ENCODE measurements at regions of chr10 and their contacts with region 1.

Region 1: DNA sequence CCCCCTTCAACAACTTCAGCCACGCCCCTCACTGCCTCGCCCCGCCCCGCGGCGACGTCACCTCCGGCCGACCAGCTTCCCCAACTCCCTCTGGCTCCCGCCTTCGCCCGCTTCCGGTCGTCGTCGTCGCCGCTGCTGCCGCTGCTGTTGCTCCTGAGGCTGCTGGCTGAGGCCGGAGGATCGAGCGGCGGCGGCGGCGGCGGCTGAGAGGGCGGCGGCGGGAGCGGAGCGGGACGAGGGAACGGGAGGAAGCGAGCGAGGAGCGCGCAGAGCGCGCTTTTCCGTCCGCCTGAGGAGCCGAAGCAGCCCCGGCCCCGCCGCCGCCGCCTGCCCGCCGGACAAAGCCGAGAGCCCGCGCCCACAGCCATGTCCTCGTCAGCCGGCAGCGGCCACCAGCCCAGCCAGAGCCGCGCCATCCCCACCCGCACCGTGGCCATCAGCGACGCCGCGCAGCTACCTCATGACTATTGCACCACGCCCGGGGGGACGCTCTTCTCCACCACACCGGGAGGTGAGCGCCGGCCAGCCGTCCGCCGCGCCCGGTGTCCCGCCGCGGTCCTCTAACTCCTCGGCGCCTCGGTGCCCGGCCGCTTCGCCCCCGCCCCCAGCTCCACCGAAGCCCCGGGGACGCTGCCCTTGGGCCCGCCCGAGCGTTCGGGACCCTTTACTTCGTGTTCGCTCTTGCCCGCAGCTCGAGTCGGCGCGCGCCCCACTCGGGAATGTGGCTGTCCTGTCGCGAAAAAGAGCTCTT is at the start of gene EIF4EBP2:
- DNase-seq: peak; percentile 94 to 100 (median 98)
- ATAC-seq: peak; percentile 93
- H3K4me3 ChIP-seq: peak within 1 kb of the TSS; percentile 87
- H3K4me3 Mint-ChIP-seq: peak within 1 kb of the TSS; percentile 96
- H3K27ac ChIP-seq: peak within 1 kb of the TSS; percentile 60 to 74
- H3K27ac Mint-ChIP-seq: peak within 1 kb of the TSS; percentile 86
- H3K4me1 ChIP-seq: peaks cover 35% of the 10 kb centered on the region
- H3K4me1 Mint-ChIP-seq: peaks cover 50% of the 10 kb centered on the region
- H3K27me3 ChIP-seq: no peaks in the 10 kb centered on the region
- H3K27me3 Mint-ChIP-seq: no peaks in the 10 kb centered on the region
- CTCF ChIP-seq: no peak
- total RNA-seq, gene EIF4EBP2: 21.4 to 22.6 TPM

Region 2: DNA sequence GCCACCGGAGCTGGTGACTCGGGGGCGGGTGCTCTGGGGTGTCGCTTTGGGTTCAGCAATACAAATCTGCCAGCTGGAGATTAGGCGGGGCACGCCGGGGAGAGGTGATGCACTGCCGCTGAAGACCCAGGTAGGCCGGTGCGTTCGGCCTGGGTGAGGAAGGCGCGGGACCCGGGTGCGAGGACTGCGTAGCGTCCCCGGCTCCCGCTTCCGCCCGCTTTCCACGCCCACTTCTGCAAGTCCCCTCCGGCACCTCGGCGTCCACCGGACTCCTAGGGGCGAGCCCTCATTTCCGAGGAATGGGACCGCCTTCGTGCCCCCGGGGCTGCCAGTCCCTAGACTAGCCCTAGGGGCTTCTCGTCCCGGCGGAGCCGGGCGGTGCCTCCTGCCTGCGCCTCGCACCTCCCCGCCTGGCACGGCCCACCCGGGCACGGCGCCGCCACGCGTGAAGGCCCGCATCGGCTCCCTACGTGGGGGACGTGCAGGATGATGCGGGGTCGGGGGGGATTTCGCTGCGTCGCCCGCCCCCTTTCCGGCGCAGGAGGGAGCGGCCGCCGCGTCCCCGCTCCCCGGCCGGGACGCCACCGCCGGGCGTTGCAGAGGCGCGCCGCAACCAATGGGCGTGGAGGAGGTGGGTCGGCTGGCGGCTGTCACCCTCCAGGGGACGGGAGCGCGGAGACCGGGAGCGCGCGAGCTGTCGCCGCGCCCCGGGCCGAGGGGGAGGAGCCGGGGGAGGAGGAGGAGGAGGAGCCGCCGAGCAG is 1085.9 kb before region 1 on chr10:
- CTCF ChIA-PET with region 1: no interaction called
- POLR2A ChIA-PET with region 1: no interaction called
- intact Hi-C with region 1: loop called in 1 of 2 experiments (anchors 5 kb)
- DNase-seq: peak; percentile 83 to 96 (median 90)
- ATAC-seq: peak; percentile 90
- H3K4me3 ChIP-seq: peak overlapping the region; percentile 80
- H3K4me3 Mint-ChIP-seq: peak overlapping the region; percentile 98
- H3K27ac ChIP-seq: peak overlapping the region; percentile 86 to 93
- H3K27ac Mint-ChIP-seq: peak overlapping the region; percentile 95
- H3K4me1 ChIP-seq: peaks cover 45% of the 10 kb centered on the region
- H3K4me1 Mint-ChIP-seq: peaks cover 42% of the 10 kb centered on the region
- H3K27me3 ChIP-seq: no peaks in the 10 kb centered on the region
- H3K27me3 Mint-ChIP-seq: no peaks in the 10 kb centered on the region
- CTCF ChIP-seq: no peak

Region 3: GRCh38 chr10:70169649-70170364 is 234.4 kb before region 1 on chr10:
- CTCF ChIA-PET with region 1: interaction called, 6 read pairs
- POLR2A ChIA-PET with region 1: interaction called, 21 read pairs
- intact Hi-C with region 1: loop called in 1 of 2 experiments (anchors 5 kb)
- DNase-seq: peak in 3 of 14 experiments; percentile 24 to 50 (median 28)
- ATAC-seq: peak; percentile 21
- H3K4me3 ChIP-seq: peak overlapping the region; percentile 97
- H3K4me3 Mint-ChIP-seq: peak overlapping the region; percentile 98
- H3K27ac ChIP-seq: peak overlapping the region; percentile 75 to 93
- H3K27ac Mint-ChIP-seq: peak overlapping the region; percentile 94
- H3K4me1 ChIP-seq: peaks cover 60% of the 10 kb centered on the region
- H3K4me1 Mint-ChIP-seq: peaks cover 64% of the 10 kb centered on the region
- H3K27me3 ChIP-seq: no peaks in the 10 kb centered on the region
- H3K27me3 Mint-ChIP-seq: no peaks in the 10 kb centered on the region
- CTCF ChIP-seq: no peak

Region 4: DNA sequence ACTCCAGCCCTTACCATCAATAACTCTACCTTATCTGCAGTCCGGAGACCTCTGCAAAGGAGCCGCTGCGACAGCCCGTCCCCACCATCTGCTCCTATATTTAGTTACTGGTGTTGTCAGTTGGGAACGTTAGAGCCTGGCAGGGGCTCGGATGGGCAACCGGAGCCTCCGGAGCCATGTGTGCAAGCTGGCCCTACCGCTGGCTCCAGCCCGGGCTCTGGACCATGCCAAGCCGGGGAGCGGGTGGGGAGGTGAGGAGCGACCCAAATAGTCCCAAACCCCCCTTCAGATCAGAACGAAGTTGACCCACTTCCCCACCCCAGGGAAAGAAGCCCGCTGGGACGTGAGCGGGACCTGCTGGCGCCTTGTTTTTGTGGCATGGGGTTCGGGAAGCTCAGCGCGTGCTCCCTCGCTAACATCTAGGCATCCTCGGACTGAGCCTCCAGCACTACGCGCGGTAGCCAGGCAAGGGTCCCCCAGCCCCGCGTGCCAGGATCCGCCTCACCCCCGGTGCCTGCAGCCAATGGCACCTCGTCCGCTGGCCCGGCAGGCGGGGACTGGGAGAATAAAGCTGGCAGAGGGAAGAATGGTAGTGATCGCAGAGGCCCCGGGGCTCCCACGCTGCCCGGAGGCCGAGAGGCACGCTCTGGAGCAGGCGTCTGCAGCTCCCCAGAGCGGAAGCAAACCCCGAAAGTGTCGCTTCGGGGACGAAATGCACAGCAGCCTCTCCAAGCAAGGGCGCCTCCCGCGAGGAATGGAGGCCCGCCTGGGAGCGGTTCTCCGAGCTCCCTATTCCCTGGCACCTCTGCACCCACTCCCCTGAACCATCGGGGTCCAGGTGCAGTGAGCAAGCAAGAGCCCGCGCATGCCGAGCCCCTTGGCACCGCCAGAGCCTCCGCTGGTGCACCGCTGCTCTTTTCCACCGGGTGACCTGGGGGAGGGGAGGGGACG is 22.5 kb before region 1 on chr10:
- CTCF ChIA-PET with region 1: interaction called, 6 read pairs
- POLR2A ChIA-PET with region 1: interaction called, 23 read pairs
- intact Hi-C with region 1: loop called in 1 of 2 experiments (anchors 1 kb)
- DNase-seq: peak in 10 of 14 experiments; percentile 3 to 55 (median 29)
- ATAC-seq: peak; percentile 37
- H3K4me3 ChIP-seq: peak overlapping the region; percentile 94
- H3K4me3 Mint-ChIP-seq: peak overlapping the region; percentile 91
- H3K27ac ChIP-seq: no peak overlapping the region
- H3K27ac Mint-ChIP-seq: no peak overlapping the region
- H3K4me1 ChIP-seq: peaks cover 16% of the 10 kb centered on the region
- H3K4me1 Mint-ChIP-seq: peaks cover 11% of the 10 kb centered on the region
- H3K27me3 ChIP-seq: no peaks in the 10 kb centered on the region
- H3K27me3 Mint-ChIP-seq: no peaks in the 10 kb centered on the region
- CTCF ChIP-seq: no peak

Region 5: GRCh38 chr10:70430493-70431445 is 26.6 kb after region 1 on chr10:
- CTCF ChIA-PET with region 1: no interaction called
- POLR2A ChIA-PET with region 1: interaction called, 14 read pairs
- intact Hi-C with region 1: no loop called
- DNase-seq: no peak
- ATAC-seq: no peak
- H3K4me3 ChIP-seq: no peak overlapping the region
- H3K4me3 Mint-ChIP-seq: no peak overlapping the region
- H3K27ac ChIP-seq: no peak overlapping the region
- H3K27ac Mint-ChIP-seq: peak overlapping the region; percentile 57
- H3K4me1 ChIP-seq: peaks cover 32% of the 10 kb centered on the region
- H3K4me1 Mint-ChIP-seq: peaks cover 42% of the 10 kb centered on the region
- H3K27me3 ChIP-seq: no peaks in the 10 kb centered on the region
- H3K27me3 Mint-ChIP-seq: no peaks in the 10 kb centered on the region
- CTCF ChIP-seq: no peak

Region 6: DNA sequence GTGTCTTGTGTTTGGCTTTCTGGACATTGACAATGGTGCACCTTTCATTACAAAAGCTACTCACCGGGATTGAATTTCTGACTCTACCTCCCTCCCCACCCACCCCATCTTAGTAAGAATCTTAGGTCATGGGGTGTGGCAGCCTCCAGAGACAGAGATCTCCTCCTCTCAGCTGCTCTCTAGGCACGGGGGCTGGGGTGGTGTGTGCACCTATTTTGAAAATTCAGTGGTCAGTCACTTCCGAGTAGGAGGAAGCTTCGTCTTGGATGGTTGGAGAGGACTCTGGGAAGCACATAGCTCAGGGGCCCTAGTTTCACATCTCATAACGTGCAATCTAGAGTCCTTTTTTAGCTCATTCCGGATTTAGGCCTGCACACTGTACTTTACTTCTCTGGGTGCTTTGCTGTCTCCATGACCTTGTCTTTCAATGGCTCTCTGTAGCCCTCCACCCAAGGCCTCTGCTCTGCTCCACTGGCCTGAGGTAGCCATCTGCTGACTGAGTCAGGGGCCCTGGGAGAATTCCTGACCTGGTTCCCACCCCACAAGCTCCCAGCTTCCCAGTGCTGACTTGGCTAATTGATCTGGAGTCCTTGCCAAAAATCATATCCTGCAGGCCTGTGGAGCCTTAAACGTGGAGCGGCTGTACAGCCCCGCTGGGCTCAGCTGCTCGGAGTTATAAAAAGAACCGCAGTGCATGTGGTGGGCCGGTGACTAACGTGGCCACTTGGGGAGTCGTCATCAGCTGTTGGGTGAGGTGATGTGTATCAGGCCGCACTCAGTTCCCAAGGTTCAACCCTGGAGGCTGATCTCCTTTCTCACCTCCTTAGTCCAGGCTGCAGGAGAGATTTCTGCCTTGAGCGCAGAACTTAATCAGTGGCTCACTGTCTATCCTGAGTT is 248.8 kb after region 1 on chr10:
- CTCF ChIA-PET with region 1: no interaction called
- POLR2A ChIA-PET with region 1: no interaction called
- intact Hi-C with region 1: no loop called
- DNase-seq: no peak
- ATAC-seq: no peak
- H3K4me3 ChIP-seq: no peak overlapping the region
- H3K4me3 Mint-ChIP-seq: no peak overlapping the region
- H3K27ac ChIP-seq: no peak overlapping the region
- H3K27ac Mint-ChIP-seq: no peak overlapping the region
- H3K4me1 ChIP-seq: no peaks in the 10 kb centered on the region
- H3K4me1 Mint-ChIP-seq: no peaks in the 10 kb centered on the region
- H3K27me3 ChIP-seq: peaks cover 0 to 3% of the 10 kb centered on the region in 2 experiments
- H3K27me3 Mint-ChIP-seq: no peaks in the 10 kb centered on the region
- CTCF ChIP-seq: no peak